Psoas muscle (tissue), 8 donors: ENCODE measurements at regions of chr17 and their contacts with region 1.

Region 1: DNA sequence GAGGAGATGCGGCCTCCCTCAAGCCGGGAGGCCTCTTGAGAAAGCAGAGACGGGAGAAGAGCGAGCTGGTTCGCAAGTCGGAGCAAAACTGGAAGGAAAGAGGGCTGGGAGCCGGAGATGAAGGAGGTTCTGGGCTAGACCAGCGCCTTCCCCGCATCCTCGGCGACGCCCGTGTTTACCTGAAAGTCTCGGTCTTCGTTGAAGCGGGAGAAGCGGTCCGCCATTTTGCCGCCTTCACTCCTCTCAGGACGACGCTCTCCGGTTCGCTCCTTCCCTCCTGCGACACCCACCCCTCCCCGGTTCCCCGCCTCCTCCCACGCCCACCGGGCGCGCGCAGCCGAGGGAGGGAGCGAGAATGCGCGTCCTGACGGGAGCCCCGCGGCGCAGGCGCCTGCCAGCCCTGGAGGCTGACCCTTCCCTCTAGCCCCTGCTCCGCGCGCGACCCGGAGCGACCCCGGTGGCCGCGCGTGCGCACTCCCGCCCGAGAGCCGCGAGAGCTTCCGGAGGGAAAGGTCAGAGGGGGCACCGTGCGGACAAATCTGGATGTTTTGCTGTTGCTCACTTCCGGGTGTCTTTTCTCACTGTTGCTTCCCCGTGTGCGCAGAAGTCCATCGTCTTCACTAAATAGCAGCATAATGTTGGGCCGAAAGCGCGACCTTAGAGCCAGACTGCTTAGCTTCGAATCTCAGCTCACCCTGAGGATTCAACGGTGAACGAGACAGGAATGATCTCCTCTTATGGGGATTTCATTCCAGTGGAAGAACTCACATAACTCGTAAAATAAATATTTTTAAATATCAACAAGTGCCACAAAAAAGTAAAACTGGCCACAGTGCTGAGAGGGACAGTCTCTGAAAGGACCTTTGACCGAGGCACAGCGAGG is at the start of gene GPATCH8:
- DNase-seq: peak; percentile 95 to 98
- ATAC-seq: peak; percentile 95 to 99 (median 98)
- H3K4me3 ChIP-seq: peak within 1 kb of the TSS; percentile 86
- H3K27ac ChIP-seq: peak within 1 kb of the TSS; percentile 91
- H3K4me1 ChIP-seq: peaks cover 38% of the 10 kb centered on the region
- H3K27me3 ChIP-seq: no peaks in the 10 kb centered on the region
- CTCF ChIP-seq: no peak
- total RNA-seq, gene GPATCH8: 16.5 to 28.1 (median 21.7) TPM

Region 2: DNA sequence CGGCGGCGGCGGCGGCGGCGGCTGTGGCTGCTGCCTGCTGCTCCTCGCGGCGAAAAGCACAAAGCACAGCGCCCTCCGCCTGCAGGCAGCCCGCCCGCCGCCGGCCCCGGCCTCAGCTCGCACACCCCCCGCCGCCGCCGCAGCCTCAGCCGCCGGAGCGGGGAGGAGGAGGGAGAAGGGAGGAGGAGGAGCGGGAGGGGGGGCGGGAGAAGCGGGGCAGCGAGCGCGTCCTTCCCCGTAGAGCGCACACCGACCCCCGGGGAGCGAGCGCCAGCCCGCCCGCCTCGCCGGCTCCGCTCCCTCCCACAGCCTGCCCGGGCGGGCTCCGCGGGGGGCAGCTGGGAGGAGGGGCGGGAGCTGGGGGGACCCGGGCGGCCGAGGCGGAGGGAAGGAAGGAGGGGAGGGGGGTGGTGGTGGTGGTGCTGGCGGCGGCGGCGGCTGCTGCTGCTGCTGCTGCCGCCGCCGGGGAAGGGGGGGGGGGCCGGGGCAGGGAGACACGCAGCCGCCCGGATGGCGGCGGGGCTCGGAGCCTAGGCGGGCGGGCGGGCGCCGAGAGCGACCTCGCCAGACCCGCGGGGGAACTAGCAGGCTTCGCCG is 283.7 kb before region 1 on chr17 and contains the start of gene UBTF:
- intact Hi-C with region 1: loop called in 1 of 2 experiments (anchors 5 kb)
- DNase-seq: peak; percentile 71 to 84
- ATAC-seq: peak; percentile 9 to 32 (median 20)
- H3K4me3 ChIP-seq: peak within 1 kb of the TSS; percentile 85
- H3K27ac ChIP-seq: peak within 1 kb of the TSS; percentile 98
- H3K4me1 ChIP-seq: peaks cover 44% of the 10 kb centered on the region
- H3K27me3 ChIP-seq: no peaks in the 10 kb centered on the region
- CTCF ChIP-seq: no peak
- total RNA-seq, gene UBTF: 42.3 to 67.5 (median 49.9) TPM

Region 3: DNA sequence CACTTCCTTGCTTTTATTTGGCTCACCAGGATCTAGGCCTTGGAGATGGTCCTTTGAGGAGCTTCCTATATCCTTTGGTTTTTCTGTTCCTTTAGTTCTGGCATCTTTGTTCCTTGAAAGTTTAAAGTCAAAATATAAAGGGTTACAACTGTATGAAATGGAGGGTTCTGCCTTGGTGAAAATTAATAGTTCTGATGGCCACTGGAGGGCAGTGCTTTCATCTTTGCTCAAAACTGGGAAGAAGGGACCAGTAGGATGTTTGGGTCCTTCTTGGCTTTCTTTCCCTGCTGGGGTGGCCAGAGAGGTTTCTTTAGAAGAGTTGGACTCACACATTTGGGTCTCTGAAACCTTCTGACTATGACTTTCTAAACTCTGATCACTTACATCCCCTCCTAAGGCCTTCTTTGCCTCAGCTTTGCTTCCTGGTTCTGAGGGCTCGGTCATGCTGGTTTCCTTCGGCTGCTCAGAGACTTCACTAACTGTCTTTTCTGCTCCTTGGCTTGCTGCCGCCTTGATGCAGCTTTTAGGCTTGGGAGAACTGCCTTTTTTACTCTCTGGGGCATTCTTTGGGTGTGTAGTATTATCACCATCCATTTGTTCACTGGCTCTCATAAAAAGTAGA is 103.1 kb before region 1 on chr17:
- intact Hi-C with region 1: loop called in 1 of 2 experiments (anchors 10 kb)
- DNase-seq: no peak
- ATAC-seq: peak; percentile 48 to 78 (median 60)
- H3K4me3 ChIP-seq: no peak overlapping the region
- H3K27ac ChIP-seq: no peak overlapping the region
- H3K4me1 ChIP-seq: no peaks in the 10 kb centered on the region
- H3K27me3 ChIP-seq: no peaks in the 10 kb centered on the region
- CTCF ChIP-seq: peak; percentile 51

Region 4: GRCh38 chr17:44438636-44439035 is 64.8 kb before region 1 on chr17:
- intact Hi-C with region 1: loop called (anchors 5 kb)
- DNase-seq: peak in 1 of 2 donors; percentile 72
- ATAC-seq: peak; percentile 95 to 97 (median 96)
- H3K4me3 ChIP-seq: peak overlapping the region; percentile 22
- H3K27ac ChIP-seq: peak overlapping the region; percentile 81
- H3K4me1 ChIP-seq: peaks cover 46% of the 10 kb centered on the region
- H3K27me3 ChIP-seq: no peaks in the 10 kb centered on the region
- CTCF ChIP-seq: no peak